AG04450 (cell line): ENCODE measurements at regions of chr5 and their contacts with region 1.

Region 1: DNA sequence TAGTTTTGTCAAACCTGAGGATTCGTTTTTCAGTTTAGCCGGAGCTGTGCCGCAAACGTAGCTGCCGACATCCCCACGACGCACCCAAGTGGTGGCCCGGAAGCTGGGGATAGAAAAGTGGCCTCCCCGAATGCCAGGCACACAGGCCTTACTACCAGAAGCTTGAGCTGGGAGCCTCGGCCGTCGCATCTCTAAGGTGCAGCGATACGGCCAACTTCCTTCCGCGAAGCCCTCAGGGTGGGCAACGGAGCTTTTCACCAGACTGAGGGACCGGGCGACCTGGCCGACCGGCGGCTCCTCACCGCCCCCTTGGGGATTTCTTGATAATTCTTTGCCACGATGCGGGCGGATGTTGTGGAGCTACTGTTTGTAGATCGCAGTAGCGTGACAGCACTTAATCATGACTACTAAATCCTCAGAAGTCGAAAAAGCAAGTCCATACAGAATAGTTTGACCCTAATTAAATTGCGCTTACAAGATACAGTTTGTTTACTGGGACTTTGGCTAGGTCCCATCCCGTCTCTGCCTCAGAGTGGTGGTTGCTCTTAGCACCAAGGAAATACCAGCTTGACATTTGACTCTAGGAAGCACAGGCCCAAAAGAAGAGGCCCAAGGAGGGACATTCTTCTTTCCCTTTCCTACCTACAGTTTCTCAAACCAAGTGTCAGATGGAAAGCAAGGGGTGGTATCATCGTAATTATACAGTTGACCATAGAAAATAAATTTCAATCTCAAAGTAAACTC is 613 bp upstream of the TMEM267 start:
- DNase-seq: peak; percentile 45
- H3K4me3 ChIP-seq: peak overlapping the region; percentile 87
- H3K27ac ChIP-seq: peak overlapping the region; percentile 95
- H3K27me3 ChIP-seq: no peaks in the 10 kb centered on the region
- CTCF ChIP-seq: peak; percentile 70

Region 2: DNA sequence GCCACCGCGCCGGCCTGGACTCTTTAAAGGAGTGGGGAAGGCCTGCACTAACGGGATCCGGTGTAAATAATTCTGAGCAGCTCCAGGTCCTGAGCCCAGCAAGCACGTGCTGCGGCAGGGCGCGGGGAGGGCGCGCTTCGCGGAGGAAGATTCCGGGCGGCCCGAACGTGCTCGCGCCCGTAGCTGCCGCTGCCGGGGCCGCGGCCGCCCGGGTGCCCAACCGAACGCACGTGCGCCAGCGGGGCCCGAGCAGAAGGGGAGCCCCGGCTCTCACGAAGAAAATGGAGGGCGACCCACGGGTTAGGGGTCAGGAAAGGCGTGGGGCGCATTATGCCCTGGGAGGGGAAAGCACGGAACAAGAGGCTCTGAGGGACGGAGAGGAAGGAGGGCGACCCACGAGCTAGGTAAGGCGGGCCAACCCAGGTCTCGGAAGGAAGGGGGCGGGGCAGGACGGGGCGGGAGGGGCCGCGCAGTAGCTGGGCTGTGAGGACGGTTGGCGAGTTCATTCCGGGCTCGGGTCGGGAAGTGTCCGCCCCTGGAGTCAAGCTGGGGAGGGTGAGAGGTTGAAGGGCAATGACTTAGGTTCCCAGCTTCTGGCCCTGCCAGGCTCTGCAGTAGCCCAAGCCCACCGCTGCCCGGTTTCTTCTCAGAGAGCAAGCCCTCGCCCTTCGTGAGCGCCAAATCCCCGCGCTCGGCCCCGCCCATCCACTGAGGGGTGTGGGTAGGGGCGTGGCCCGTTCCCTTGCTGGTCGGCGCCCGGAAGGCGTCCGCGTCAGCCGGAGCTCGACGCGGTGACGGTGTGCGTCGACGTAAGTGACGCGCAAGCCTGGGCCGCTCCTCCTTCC is 363.3 kb before region 1 on chr5 and contains the start of gene ZNF131:
- CTCF ChIA-PET with region 1: interaction called, 7 read pairs
- POLR2A ChIA-PET with region 1: interaction called, 15 read pairs
- DNase-seq: peak; percentile 91
- H3K4me3 ChIP-seq: peak within 1 kb of the TSS; percentile 79
- H3K27ac ChIP-seq: peak within 1 kb of the TSS; percentile 91
- H3K27me3 ChIP-seq: no peaks in the 10 kb centered on the region
- CTCF ChIP-seq: no peak
- polyA plus RNA-seq, gene ZNF131: 30.4 and 42.5 TPM in 2 replicates

Region 3: DNA sequence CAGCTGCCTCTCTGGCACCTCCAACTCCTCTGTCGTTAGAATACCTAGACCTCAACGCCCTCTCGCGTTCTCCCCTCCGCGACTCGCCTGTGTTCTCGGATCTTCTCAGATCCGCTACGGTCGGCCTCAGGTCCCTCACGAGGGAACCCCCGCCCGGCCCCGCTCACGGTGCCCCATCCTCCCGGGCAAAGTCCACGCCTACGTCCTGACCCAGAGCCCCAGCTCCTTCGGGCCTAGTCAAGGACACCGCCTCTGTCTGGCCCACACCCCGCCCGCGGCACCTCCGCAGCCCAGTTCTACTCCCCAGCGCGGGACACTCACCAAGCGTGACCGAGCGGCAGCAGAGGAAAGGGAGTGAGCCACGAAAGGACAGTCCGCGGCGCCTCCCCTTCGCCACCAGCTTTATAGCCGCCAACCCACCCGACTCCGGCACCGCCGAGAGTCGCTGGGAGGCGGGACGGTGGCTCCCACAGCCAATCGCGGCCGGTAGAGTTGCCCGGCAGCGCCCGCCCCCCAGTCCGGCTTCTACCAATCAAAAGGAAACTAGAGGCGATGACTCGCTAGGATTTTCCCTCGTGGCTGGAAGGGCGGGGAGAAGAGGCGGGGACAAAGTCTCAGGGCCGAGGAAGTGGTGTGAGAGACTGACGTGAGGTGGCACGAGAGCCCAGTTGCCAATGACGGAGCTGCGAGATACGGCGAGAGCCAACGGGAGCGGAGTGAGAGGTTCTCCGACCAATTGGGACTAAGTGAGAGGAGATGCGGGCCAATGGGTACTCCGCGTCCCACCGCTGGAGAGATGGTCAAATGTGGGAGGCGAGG is 171.0 kb before region 1 on chr5 and contains the start of gene HMGCS1:
- CTCF ChIA-PET with region 1: interaction called, 7 read pairs
- POLR2A ChIA-PET with region 1: interaction called, 17 read pairs
- DNase-seq: peak; percentile 99
- H3K4me3 ChIP-seq: peak within 1 kb of the TSS; percentile 98
- H3K27ac ChIP-seq: peak within 1 kb of the TSS; percentile 91
- H3K27me3 ChIP-seq: peaks cover 3% of the 10 kb centered on the region
- CTCF ChIP-seq: peak; percentile 8; the same call in 1 of the 2 replicates
- polyA plus RNA-seq, gene HMGCS1: 26.5 and 31.1 TPM in 2 replicates

Region 4: DNA sequence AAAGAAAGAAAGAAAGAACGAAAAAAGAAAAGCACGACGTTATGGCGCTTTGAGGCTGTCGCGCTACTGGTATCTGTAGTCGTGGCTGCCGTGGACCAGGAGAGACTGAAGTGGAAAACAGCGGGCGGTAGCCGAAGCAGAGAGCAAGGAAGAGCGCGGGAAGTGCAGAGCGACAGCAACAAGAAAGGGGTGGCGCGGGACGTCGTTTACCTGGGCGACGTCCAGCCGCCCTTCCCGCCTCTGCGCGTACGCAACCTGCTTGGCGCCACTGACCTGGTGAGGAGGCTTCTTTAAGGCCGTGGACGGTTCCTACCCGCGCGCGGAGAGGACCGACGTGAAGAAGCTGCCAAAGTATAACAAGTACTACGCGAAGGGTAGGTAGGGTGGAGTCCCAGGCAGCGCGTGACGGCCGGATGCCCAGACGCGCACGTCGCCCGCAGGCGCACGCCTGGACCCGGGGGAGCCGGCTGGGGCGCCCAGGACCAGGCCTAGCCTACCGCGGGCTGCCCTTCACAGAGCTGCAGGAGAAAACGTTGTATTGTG is 87.4 kb before region 1 on chr5:
- CTCF ChIA-PET with region 1: interaction called, 15 read pairs
- POLR2A ChIA-PET with region 1: interaction called, 7 read pairs
- DNase-seq: no peak
- H3K4me3 ChIP-seq: peak overlapping the region; percentile 52
- H3K27ac ChIP-seq: no peak overlapping the region
- H3K27me3 ChIP-seq: peaks cover 11% of the 10 kb centered on the region
- CTCF ChIP-seq: no peak

Region 5: DNA sequence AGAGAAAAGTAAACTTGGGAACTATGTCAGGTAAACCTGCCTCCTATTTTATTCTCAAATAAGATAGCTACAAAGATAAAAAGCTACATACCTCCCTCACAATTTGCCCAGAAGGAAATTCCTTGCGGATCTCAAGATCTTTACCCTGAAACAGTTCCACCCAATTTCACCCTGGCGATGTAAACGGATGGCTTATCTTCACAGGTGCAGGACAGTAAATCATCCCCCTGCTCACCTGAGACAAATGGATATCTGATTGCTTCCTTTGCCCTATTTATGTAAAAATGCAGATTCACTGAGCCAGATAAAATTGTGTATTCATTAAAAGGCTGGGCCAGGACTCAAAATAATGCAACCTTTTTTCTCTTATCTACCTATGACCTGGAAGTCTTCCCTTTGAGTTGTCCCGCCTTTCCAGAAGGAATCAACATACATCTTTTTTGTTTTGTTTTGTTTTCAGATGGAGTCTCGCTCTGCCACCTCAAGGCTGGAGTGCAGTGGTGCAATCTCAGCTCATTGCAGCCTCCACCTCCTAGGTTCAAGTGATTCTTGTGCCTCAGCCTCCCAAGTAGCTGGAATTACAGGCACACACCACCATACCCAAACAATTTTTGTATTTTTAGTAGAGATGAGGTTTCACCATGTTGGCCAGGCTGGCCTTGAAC is 14.4 kb before region 1 on chr5:
- CTCF ChIA-PET with region 1: interaction called, 13 read pairs
- POLR2A ChIA-PET with region 1: no interaction called
- DNase-seq: no peak
- H3K4me3 ChIP-seq: no peak overlapping the region
- H3K27ac ChIP-seq: no peak overlapping the region
- H3K27me3 ChIP-seq: no peaks in the 10 kb centered on the region
- CTCF ChIP-seq: no peak

Region 6: GRCh38 chr5:43514816-43515677 is 30.8 kb after region 1 on chr5 and contains the start of gene C5orf34:
- CTCF ChIA-PET with region 1: interaction called, 13 read pairs
- POLR2A ChIA-PET with region 1: interaction called, 27 read pairs
- DNase-seq: peak; percentile 89
- H3K4me3 ChIP-seq: peak within 1 kb of the TSS; percentile 79
- H3K27ac ChIP-seq: peak within 1 kb of the TSS; percentile 96
- H3K27me3 ChIP-seq: no peaks in the 10 kb centered on the region
- CTCF ChIP-seq: no peak
- polyA plus RNA-seq, gene C5orf34: 1.9 and 3.5 TPM in 2 replicates

Region 7: DNA sequence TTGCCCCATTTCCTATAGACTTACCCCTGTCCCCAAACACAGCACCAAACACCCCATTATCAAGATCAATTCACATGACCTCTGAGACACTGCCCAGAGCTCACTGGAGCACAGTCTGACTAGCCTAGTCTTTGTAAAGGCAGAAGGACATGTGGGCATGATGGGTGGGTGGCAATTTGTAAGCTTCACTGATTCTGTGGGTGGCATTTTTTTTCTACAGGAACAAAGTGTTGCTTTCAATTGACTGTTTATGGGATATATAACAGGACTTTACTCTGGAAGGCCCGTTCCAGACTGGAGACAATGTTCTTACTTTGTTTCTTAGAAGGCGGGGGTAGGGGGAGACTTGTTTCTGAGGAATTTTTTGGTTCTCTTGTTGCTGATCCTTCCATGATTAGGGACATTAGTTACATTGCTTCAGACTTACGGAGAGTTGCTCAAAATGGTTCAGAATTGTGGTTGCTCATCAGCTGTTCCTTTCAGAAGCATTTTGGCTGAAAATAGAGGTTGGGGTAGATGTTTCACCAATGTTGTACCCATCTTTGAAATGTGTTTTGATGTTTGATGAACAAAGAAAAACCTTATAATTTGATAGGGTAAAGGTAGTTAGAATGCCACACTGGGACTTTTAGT is 138.9 kb after region 1 on chr5:
- CTCF ChIA-PET with region 1: no interaction called
- POLR2A ChIA-PET with region 1: no interaction called
- DNase-seq: no peak
- H3K4me3 ChIP-seq: no peak overlapping the region
- H3K27ac ChIP-seq: no peak overlapping the region
- H3K27me3 ChIP-seq: no peaks in the 10 kb centered on the region
- CTCF ChIP-seq: no peak